ENCODE measurements at regions of chr11 and their contacts with region 1.

Region 1: GRCh38 chr11:6757373-6757967 is 14.3 kb downstream of the OR2AG2 start:
- DNase-seq: peak; percentile 71
- H3K4me3 Mint-ChIP-seq: no peak overlapping the region
- H3K27ac Mint-ChIP-seq: no peak overlapping the region
- H3K4me1 Mint-ChIP-seq: peaks cover 4% of the 10 kb centered on the region
- H3K27me3 Mint-ChIP-seq: peaks cover 3% of the 10 kb centered on the region

Region 2: GRCh38 chr11:6737872-6738466 is 19.5 kb before region 1 on chr11:
- CTCF ChIA-PET with region 1: interaction called, 15 read pairs
- POLR2A ChIA-PET with region 1: no interaction called
- DNase-seq: peak; percentile 82
- H3K4me3 Mint-ChIP-seq: no peak overlapping the region
- H3K27ac Mint-ChIP-seq: peak overlapping the region; percentile 47
- H3K4me1 Mint-ChIP-seq: peaks cover 84% of the 10 kb centered on the region
- H3K27me3 Mint-ChIP-seq: no peaks in the 10 kb centered on the region

Region 3: GRCh38 chr11:6746086-6746618 is 11.3 kb before region 1 on chr11:
- CTCF ChIA-PET with region 1: interaction called, 20 read pairs
- POLR2A ChIA-PET with region 1: no interaction called
- DNase-seq: peak; percentile 60
- H3K4me3 Mint-ChIP-seq: no peak overlapping the region
- H3K27ac Mint-ChIP-seq: no peak overlapping the region
- H3K4me1 Mint-ChIP-seq: peaks cover 33% of the 10 kb centered on the region
- H3K27me3 Mint-ChIP-seq: no peaks in the 10 kb centered on the region